ENCODE measurements at regions of chr13 and their contacts with region 1.

Region 1: GRCh38 chr13:114065141-114065925 is 67.1 kb downstream of the RASA3 start:
- DNase-seq: peak; percentile 89 to 93
- ATAC-seq: peak; percentile 85 to 91 (median 88)
- H3K4me3 ChIP-seq: peak overlapping the region; percentile 66
- H3K27ac ChIP-seq: peak overlapping the region; percentile 97
- H3K4me1 ChIP-seq: peaks cover 57% of the 10 kb centered on the region
- H3K27me3 ChIP-seq: no peaks in the 10 kb centered on the region
- CTCF ChIP-seq: no peak

Region 2: DNA sequence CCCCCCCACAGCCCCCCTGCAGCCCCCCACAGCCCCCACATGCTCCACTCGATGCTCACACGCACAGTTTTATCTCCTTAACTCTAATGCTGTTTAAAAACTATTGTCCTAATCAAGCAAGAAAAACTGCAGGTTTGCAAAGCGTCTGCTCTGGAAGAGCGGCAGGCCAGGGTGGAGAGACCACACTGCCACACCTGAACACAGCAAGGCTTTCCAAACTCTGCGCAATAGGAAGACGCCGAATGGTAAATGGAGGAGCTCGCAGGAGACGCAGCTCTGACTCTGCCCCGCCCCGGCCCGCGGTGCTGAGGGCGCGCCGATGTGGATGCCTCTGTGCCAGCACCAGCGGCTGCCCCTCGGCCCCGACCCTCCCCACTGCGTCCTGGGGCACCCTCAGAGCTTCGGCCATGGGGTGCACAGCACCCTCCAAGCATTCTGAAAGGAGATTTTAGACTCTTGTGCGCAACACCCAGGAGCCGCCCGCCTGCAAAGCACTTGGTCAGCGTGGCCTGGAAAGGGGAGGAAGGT is 34.6 kb after region 1 on chr13:
- intact Hi-C with region 1: loop called (anchors 5 kb)
- DNase-seq: peak in 1 of 2 donors; percentile 58
- ATAC-seq: peak in 3 of 4 donors; percentile 14 to 42 (median 15)
- H3K4me3 ChIP-seq: no peak overlapping the region
- H3K27ac ChIP-seq: peak overlapping the region; percentile 75
- H3K4me1 ChIP-seq: peaks cover 38% of the 10 kb centered on the region
- H3K27me3 ChIP-seq: no peaks in the 10 kb centered on the region
- CTCF ChIP-seq: no peak

Region 3: GRCh38 chr13:114110091-114110829 is 44.9 kb after region 1 on chr13:
- intact Hi-C with region 1: no loop called
- DNase-seq: peak; percentile 51 to 73
- ATAC-seq: peak in 2 of 4 donors; percentile 9 to 15
- H3K4me3 ChIP-seq: no peak overlapping the region
- H3K27ac ChIP-seq: peak overlapping the region; percentile 81
- H3K4me1 ChIP-seq: peaks cover 70% of the 10 kb centered on the region
- H3K27me3 ChIP-seq: no peaks in the 10 kb centered on the region
- CTCF ChIP-seq: no peak

Region 4: GRCh38 chr13:114130837-114131582 is 65.7 kb after region 1 on chr13:
- intact Hi-C with region 1: loop called (anchors 1 to 2 kb)
- DNase-seq: peak; percentile 76 to 90
- ATAC-seq: peak; percentile 70 to 79 (median 78)
- H3K4me3 ChIP-seq: peak overlapping the region; percentile 82
- H3K27ac ChIP-seq: peak overlapping the region; percentile 92
- H3K4me1 ChIP-seq: peaks cover 46% of the 10 kb centered on the region
- H3K27me3 ChIP-seq: no peaks in the 10 kb centered on the region
- CTCF ChIP-seq: no peak

Measured in psoas muscle (tissue), 8 donors.